Activated CD8-positive, alpha-beta T cell treated with anti-CD3 and anti-CD28 coated beads, Interleukin-2, amount 10 ng/mL, durations not matched to agents 7 days and 5 days (primary cell): ENCODE measurements at regions of chr3 and their contacts with region 1.

Region 1: GRCh38 chr3:167380004-167380689 is at the start of gene ZBBX:
- DNase-seq: peak; percentile 88
- ATAC-seq: peak; percentile 92
- H3K4me3 Mint-ChIP-seq: peak within 1 kb of the TSS; percentile 73
- H3K27ac Mint-ChIP-seq: no peak within 1 kb of the TSS
- H3K4me1 Mint-ChIP-seq: peaks cover 6% of the 10 kb centered on the region
- H3K27me3 Mint-ChIP-seq: peaks cover 8% of the 10 kb centered on the region
- total RNA-seq, gene ZBBX: not detected

Region 2: DNA sequence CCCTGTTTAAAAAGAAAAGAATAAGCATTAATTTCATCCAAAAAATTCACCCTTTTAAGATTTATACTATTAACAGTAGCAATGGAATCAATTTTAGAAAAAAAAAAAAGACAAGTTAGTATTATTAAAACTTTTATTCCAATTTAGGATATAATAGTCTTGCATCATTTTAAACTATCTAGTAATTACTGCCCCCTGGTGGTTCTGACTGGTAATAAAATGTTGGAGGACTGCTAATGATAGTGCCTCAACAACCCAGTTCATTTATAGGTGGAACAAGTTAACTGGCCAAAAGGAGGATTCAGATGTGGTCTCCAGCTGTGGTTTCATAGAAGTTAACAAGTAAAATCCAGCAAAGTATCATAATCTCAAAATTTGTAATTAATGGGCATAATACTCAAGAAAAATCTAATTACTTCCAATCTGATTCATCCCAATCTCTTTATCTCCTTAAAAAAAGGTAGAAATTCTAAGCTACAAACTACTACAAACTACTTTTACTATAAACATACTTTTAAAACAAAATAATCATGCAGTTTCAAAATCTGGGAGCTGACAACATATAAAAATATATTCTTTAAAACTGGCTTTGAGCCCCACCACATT is 304.3 kb after region 1 on chr3:
- CTCF ChIA-PET with region 1: interaction called, 36 read pairs
- POLR2A ChIA-PET with region 1: no interaction called
- DNase-seq: peak; percentile 72
- ATAC-seq: peak; percentile 77
- H3K4me3 Mint-ChIP-seq: no peak overlapping the region
- H3K27ac Mint-ChIP-seq: no peak overlapping the region
- H3K4me1 Mint-ChIP-seq: no peaks in the 10 kb centered on the region
- H3K27me3 Mint-ChIP-seq: no peaks in the 10 kb centered on the region

Region 3: DNA sequence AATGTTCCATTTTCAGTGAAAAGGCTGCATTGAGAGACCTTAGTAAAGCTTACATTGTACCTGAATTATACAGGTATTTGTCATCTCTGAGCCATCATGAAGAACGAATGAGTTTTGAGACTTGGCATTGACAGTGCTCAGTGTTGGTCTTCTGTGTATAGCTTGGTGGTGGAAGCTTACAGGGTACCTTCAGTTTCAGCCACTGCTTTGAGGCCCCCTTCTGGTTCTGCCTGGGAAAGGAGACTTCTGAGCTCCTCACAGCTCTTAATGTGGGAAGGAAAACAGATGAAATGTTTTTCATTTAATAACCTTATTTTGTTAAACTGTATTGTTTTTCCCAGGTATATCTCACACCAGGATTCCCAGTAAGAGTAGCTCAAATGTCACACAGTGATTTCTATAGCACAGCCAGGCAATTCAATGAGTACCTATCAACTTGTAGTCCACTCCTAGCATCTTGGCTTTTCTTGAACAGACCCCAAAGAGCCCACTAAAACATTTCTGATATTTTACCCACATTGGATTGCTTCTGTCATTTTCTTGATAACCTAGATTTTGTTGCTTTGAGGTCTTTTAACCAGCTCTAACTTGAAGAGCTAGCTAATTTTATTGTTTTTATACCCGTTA is 360.9 kb after region 1 on chr3:
- CTCF ChIA-PET with region 1: interaction called, 30 read pairs
- POLR2A ChIA-PET with region 1: no interaction called
- DNase-seq: peak; percentile 55
- ATAC-seq: peak; percentile 97
- H3K4me3 Mint-ChIP-seq: no peak overlapping the region
- H3K27ac Mint-ChIP-seq: no peak overlapping the region
- H3K4me1 Mint-ChIP-seq: peaks cover 16% of the 10 kb centered on the region
- H3K27me3 Mint-ChIP-seq: no peaks in the 10 kb centered on the region

Region 4: GRCh38 chr3:167882067-167882667 is 502.0 kb after region 1 on chr3:
- CTCF ChIA-PET with region 1: interaction called, 20 read pairs
- POLR2A ChIA-PET with region 1: no interaction called
- DNase-seq: no peak
- ATAC-seq: no peak
- H3K4me3 Mint-ChIP-seq: no peak overlapping the region
- H3K27ac Mint-ChIP-seq: no peak overlapping the region
- H3K4me1 Mint-ChIP-seq: peaks cover 4% of the 10 kb centered on the region
- H3K27me3 Mint-ChIP-seq: peaks cover 12% of the 10 kb centered on the region